Naive thymus-derived CD4-positive, alpha-beta T cell (primary cell): ENCODE measurements at regions of chr9 and their contacts with region 1.

Region 1: DNA sequence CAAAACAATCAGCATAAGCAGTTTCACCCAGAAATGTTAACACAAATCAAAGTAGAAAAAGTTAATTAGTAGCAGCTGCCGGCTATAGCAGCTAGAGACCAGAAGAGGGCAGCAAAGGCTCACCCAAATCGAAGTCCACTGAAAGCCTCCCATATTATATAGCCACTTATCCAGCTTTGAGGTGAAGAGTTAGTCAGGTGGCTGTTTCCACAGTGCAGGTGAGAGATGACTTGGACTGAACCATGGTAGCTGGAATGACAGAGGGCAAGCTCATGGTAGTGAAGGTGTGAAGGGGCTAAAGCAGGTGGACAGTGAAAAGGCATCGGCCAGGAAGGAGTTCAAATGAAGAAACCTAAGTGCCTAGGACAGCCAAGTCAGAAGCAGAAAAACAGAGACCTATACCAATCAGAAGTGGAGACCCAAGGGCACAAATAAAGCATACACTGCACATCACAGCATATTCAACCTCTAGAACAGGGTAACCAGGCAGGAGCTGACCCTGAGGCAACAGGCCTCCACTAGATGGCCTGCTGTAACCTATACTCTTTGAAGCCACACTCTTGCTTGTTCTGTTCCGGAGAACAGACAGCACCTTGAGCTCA is 7.2 kb upstream of the RNF38 start:
- DNase-seq: peak; percentile 18 to 77 (median 67)
- ATAC-seq: peak; percentile 96
- H3K4me3 ChIP-seq: no peak overlapping the region
- H3K4me3 Mint-ChIP-seq: peak overlapping the region in 3 of 10 donors; percentile 0 to 15 (median 14)
- H3K27ac ChIP-seq: peak overlapping the region; percentile 30
- H3K27ac Mint-ChIP-seq: peak overlapping the region; percentile 1 to 94 (median 71)
- H3K4me1 ChIP-seq: peaks cover 0 to 7% of the 10 kb centered on the region in 2 donors
- H3K4me1 Mint-ChIP-seq: peaks cover 11 to 42% (median 24%) of the 10 kb centered on the region in 7 donors
- H3K27me3 ChIP-seq: no peaks in the 10 kb centered on the region
- H3K27me3 Mint-ChIP-seq: no peaks in the 10 kb centered on the region

Region 2: DNA sequence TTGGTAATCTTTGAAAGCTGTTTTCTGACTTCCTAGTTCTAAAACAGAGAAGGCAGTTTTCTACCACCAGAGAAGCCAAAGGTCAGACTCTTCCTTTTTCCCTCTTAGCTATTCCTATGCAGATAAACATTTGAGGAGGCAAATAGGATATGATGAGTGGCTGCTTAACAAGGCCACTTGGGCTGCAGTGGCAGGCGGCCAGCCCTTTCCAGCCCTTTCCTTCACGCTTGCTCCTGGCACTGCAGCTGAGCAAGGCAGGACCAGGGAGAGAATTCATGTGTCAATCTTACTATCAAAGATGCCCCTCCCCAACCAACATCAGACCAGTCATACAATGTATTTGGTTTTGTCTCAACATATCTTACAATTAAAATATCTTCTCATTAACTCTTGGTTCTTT is 29.7 kb after region 1 on chr9:
- CTCF ChIA-PET with region 1: interaction called, 21 read pairs
- POLR2A ChIA-PET with region 1: no interaction called
- intact Hi-C with region 1: loop called in 1 of 2 experiments (anchors 2 kb)
- DNase-seq: no peak
- ATAC-seq: no peak
- H3K4me3 ChIP-seq: no peak overlapping the region
- H3K4me3 Mint-ChIP-seq: peak overlapping the region in 1 of 10 donors; percentile 41
- H3K27ac ChIP-seq: no peak overlapping the region
- H3K27ac Mint-ChIP-seq: peak overlapping the region in 3 of 9 donors; percentile 22 to 87 (median 64)
- H3K4me1 ChIP-seq: peaks cover 0 to 7% of the 10 kb centered on the region in 2 donors
- H3K4me1 Mint-ChIP-seq: peaks cover 13 to 66% (median 53%) of the 10 kb centered on the region in 7 donors
- H3K27me3 ChIP-seq: no peaks in the 10 kb centered on the region
- H3K27me3 Mint-ChIP-seq: no peaks in the 10 kb centered on the region

Region 3: DNA sequence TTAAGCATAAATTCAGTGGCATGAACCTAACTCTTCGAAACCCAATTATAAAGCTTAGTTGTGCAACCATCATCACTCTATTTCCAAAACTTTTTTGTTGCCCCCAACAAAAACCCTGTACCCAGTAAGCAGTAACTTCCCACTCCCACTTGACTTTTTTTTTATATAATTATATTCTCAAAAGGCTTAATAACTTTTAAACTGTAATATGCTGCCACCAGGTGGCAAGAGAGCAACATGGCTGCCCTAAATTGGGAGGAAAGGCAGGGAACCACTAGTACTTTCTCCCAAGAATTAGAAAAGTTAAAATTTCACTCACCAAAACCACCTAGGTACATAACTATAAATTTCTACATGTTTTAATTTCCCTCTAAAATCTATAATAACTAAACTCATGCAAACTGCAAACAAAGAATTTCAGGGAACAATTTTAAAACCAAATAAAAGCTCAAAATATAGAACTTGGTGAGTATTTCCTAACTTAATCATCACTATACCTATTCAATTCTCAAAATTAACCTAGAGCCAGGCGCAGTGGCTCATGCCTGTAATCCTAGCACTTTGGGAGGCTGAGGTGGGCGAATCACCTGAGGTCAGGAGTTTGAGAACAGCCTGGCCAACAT is 43.0 kb after region 1 on chr9:
- CTCF ChIA-PET with region 1: interaction called, 23 read pairs
- POLR2A ChIA-PET with region 1: interaction called, 3 read pairs
- intact Hi-C with region 1: loop called (anchors 1 kb)
- DNase-seq: peak in 6 of 9 donors; percentile 17 to 36 (median 34)
- ATAC-seq: no peak
- H3K4me3 ChIP-seq: no peak overlapping the region
- H3K4me3 Mint-ChIP-seq: no peak overlapping the region
- H3K27ac ChIP-seq: no peak overlapping the region
- H3K27ac Mint-ChIP-seq: no peak overlapping the region
- H3K4me1 ChIP-seq: peaks cover 5 to 14% of the 10 kb centered on the region in 2 donors
- H3K4me1 Mint-ChIP-seq: peaks cover 0 to 57% (median 38%) of the 10 kb centered on the region in 7 donors
- H3K27me3 ChIP-seq: no peaks in the 10 kb centered on the region
- H3K27me3 Mint-ChIP-seq: no peaks in the 10 kb centered on the region

Region 4: GRCh38 chr9:36470643-36471290 is 63.5 kb after region 1 on chr9:
- CTCF ChIA-PET with region 1: interaction called, 10 read pairs
- POLR2A ChIA-PET with region 1: interaction called, 3 read pairs
- intact Hi-C with region 1: no loop called
- DNase-seq: peak in 8 of 9 donors; percentile 41 to 70 (median 60)
- ATAC-seq: peak; percentile 95
- H3K4me3 ChIP-seq: peak overlapping the region; percentile 51
- H3K4me3 Mint-ChIP-seq: peak overlapping the region; percentile 79 to 94 (median 86)
- H3K27ac ChIP-seq: peak overlapping the region; percentile 74
- H3K27ac Mint-ChIP-seq: peak overlapping the region; percentile 92 to 97 (median 96)
- H3K4me1 ChIP-seq: peaks cover 16 to 27% of the 10 kb centered on the region in 2 donors
- H3K4me1 Mint-ChIP-seq: peaks cover 27 to 52% (median 42%) of the 10 kb centered on the region in 7 donors
- H3K27me3 ChIP-seq: no peaks in the 10 kb centered on the region
- H3K27me3 Mint-ChIP-seq: no peaks in the 10 kb centered on the region

Region 5: DNA sequence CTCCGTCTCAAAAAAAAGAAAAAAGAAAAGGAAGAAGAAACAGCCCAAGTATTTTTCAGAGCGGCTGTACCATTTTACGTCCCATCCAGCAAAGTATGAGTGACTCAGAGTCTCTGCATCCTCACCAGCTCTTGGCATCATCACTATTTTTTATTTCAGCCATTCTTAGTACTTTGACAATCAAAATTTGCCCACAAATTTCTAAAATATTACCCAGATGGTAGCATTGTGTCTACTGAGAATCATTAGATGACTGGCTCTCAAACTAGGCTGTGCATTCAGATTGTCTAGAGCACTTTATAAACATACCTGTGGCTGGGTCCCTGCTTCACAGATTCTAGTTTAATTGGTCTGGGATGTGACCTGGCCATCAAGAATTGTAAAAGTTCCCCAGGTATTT is 143.9 kb after region 1 on chr9:
- CTCF ChIA-PET with region 1: interaction called, 253 read pairs
- POLR2A ChIA-PET with region 1: interaction called, 4 read pairs
- intact Hi-C with region 1: loop called (anchors 1 kb)
- DNase-seq: no peak
- ATAC-seq: no peak
- H3K4me3 ChIP-seq: no peak overlapping the region
- H3K4me3 Mint-ChIP-seq: no peak overlapping the region
- H3K27ac ChIP-seq: no peak overlapping the region
- H3K27ac Mint-ChIP-seq: no peak overlapping the region
- H3K4me1 ChIP-seq: no peaks in the 10 kb centered on the region
- H3K4me1 Mint-ChIP-seq: peaks cover 0 to 6% (median 2%) of the 10 kb centered on the region in 7 donors
- H3K27me3 ChIP-seq: no peaks in the 10 kb centered on the region
- H3K27me3 Mint-ChIP-seq: peaks cover 0 to 22% (median 3%) of the 10 kb centered on the region in 5 donors

Region 6: DNA sequence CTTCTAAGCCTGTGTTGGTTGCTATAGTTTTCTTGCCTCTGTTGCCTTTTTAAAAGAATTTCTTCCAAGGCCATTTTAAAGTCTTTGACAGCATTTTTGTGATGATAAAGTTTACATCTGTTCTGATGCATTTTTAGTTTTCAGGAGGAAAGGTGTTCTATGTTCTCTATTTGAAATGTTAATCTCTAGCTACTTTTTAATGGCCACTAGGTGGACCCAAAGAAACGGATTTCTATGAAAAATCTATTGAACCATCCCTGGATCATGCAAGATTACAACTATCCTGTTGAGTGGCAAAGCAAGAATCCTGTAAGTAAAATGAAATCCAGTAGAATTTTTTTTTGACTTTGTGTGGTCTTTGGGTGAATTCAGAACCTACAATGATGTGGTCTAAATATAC is 225.7 kb after region 1 on chr9:
- CTCF ChIA-PET with region 1: no interaction called
- POLR2A ChIA-PET with region 1: no interaction called
- intact Hi-C with region 1: loop called in 1 of 2 experiments (anchors 2 kb)
- DNase-seq: peak in 1 of 9 donors; percentile 7
- ATAC-seq: no peak
- H3K4me3 ChIP-seq: no peak overlapping the region
- H3K4me3 Mint-ChIP-seq: no peak overlapping the region
- H3K27ac ChIP-seq: no peak overlapping the region
- H3K27ac Mint-ChIP-seq: no peak overlapping the region
- H3K4me1 ChIP-seq: no peaks in the 10 kb centered on the region
- H3K4me1 Mint-ChIP-seq: peaks cover 0 to 4% (median 0%) of the 10 kb centered on the region in 7 donors
- H3K27me3 ChIP-seq: no peaks in the 10 kb centered on the region
- H3K27me3 Mint-ChIP-seq: no peaks in the 10 kb centered on the region

Region 7: DNA sequence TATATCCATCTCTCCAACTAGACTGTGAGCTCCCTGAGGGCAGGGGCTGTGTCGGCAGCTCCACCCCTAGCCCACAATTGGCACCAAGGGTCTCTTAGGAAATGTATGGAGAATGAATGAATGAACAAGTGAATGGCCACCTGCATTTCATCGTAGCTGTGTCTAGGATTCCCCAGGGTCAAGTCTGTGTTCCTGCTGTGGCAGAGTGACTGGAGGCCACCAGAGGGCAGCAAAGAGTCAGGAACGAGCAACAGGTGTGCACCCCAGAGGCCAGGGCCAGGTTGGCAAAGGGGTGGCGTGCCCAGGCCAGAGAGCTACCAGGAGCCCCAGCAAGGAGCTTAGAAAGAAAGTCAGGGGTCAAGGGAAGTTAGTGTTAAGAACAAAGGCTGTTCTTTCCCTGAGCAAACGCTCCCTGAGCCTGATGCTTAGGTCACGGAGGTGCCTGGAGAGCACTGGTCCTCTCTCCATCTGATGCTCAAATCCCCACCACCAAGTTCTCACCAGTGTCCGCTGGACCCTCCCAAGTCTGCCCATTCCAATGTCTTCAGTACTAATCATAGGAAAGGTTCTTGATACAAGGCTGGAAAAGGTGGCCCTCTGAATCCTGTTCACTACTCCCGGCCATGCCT is 466.1 kb after region 1 on chr9:
- CTCF ChIA-PET with region 1: no interaction called
- POLR2A ChIA-PET with region 1: no interaction called
- intact Hi-C with region 1: loop called in 1 of 2 experiments (anchors 1 kb)
- DNase-seq: peak; percentile 37 to 71 (median 63)
- ATAC-seq: peak; percentile 78
- H3K4me3 ChIP-seq: no peak overlapping the region
- H3K4me3 Mint-ChIP-seq: no peak overlapping the region
- H3K27ac ChIP-seq: no peak overlapping the region
- H3K27ac Mint-ChIP-seq: peak overlapping the region in 1 of 9 donors; percentile 25
- H3K4me1 ChIP-seq: no peaks in the 10 kb centered on the region
- H3K4me1 Mint-ChIP-seq: no peaks in the 10 kb centered on the region
- H3K27me3 ChIP-seq: no peaks in the 10 kb centered on the region
- H3K27me3 Mint-ChIP-seq: peaks cover 0 to 4% (median 0%) of the 10 kb centered on the region in 5 donors